ENCODE measurements at regions of chr18 and their contacts with region 1.

Region 1: GRCh38 chr18:77181953-77182707 is 49.5 kb upstream of the MBP start:
- DNase-seq: peak; percentile 36 to 72 (median 41)
- H3K4me3 ChIP-seq: no peak overlapping the region
- H3K4me3 Mint-ChIP-seq: no peak overlapping the region
- H3K27ac ChIP-seq: no peak overlapping the region
- H3K27ac Mint-ChIP-seq: peak overlapping the region in 1 of 7 donors; percentile 35
- H3K4me1 ChIP-seq: peaks cover 9 to 14% of the 10 kb centered on the region in 2 donors
- H3K4me1 Mint-ChIP-seq: peaks cover 17% of the 10 kb centered on the region
- H3K27me3 ChIP-seq: no peaks in the 10 kb centered on the region
- H3K27me3 Mint-ChIP-seq: peaks cover 0 to 10% (median 0%) of the 10 kb centered on the region in 3 donors
- CTCF ChIP-seq: no peak

Region 2: GRCh38 chr18:77147418-77147852 is 34.7 kb before region 1 on chr18:
- intact Hi-C with region 1: loop called in 1 of 2 experiments (anchors 5 kb)
- DNase-seq: peak; percentile 77 to 91 (median 86)
- H3K4me3 ChIP-seq: no peak overlapping the region
- H3K4me3 Mint-ChIP-seq: no peak overlapping the region
- H3K27ac ChIP-seq: peak overlapping the region; percentile 38 to 84
- H3K27ac Mint-ChIP-seq: peak overlapping the region; percentile 87 to 97 (median 91)
- H3K4me1 ChIP-seq: peaks cover 20 to 27% of the 10 kb centered on the region in 2 donors
- H3K4me1 Mint-ChIP-seq: peaks cover 28% of the 10 kb centered on the region
- H3K27me3 ChIP-seq: no peaks in the 10 kb centered on the region
- H3K27me3 Mint-ChIP-seq: peaks cover 0 to 3% (median 2%) of the 10 kb centered on the region in 3 donors
- CTCF ChIP-seq: no peak